Activated naive CD4-positive, alpha-beta T cell treated with anti-CD3 and anti-CD28 coated beads, Interleukin-2, amount 10 ng/mL, durations not matched to agents 7 days and 5 days (primary cell): ENCODE measurements at regions of chr17 and their contacts with region 1.

Region 1: DNA sequence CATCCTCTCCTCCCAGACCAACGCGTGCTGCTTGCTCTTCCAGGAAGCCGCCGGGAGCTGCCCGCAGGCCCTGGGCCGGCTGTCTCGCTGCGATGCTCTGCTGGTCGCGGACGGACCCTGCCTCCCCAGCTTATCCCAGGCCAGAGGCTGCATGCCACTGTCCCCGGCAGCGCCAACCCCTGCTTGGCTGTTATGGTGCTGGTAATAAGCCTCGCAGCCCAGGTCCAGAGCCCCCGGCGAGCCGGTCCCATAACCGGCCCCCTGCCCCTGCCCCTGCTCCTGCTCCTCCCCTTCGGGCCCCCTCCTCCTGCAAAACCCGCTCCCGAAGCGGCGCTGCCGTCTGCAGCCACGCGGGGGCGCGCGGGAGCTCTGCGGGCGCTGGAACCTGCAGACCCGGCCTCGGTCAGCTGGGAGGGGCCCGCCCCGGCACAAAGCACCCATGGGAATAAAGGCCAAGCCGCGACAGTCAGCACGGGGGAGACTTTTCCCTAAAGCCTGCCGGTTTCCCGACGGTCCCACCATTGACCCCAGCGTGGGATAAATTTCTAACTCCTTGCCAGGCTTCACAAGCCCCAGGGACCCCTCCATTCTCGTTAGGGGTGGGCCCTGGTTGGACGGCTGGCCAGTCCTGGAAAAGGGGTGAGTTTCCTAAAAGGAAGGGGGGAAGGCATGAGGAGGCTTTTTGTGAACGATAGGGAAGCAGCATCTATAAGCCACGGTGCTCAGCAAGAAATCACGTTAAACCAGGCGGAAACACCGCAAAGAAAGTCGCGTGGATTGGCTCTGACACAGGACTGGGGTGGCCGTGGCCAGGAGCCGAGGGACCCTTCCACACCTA is 11.2 kb downstream of the ENPP7 start:
- DNase-seq: peak; percentile 82
- H3K4me3 Mint-ChIP-seq: no peak overlapping the region
- H3K27ac Mint-ChIP-seq: no peak overlapping the region
- H3K4me1 Mint-ChIP-seq: peaks cover 14% of the 10 kb centered on the region
- H3K27me3 Mint-ChIP-seq: peaks cover 93% of the 10 kb centered on the region

Region 2: GRCh38 chr17:79728226-79728907 is 13.6 kb before region 1 on chr17:
- CTCF ChIA-PET with region 1: interaction called, 11 read pairs
- DNase-seq: peak; percentile 91
- H3K4me3 Mint-ChIP-seq: peak overlapping the region; percentile 62
- H3K27ac Mint-ChIP-seq: peak overlapping the region; percentile 82
- H3K4me1 Mint-ChIP-seq: peaks cover 22% of the 10 kb centered on the region
- H3K27me3 Mint-ChIP-seq: no peaks in the 10 kb centered on the region